Activated CD8-positive, alpha-beta T cell treated with anti-CD3 and anti-CD28 coated beads for 36 hours (primary cell): ENCODE measurements at regions of chr20 and their contacts with region 1.

Region 1: DNA sequence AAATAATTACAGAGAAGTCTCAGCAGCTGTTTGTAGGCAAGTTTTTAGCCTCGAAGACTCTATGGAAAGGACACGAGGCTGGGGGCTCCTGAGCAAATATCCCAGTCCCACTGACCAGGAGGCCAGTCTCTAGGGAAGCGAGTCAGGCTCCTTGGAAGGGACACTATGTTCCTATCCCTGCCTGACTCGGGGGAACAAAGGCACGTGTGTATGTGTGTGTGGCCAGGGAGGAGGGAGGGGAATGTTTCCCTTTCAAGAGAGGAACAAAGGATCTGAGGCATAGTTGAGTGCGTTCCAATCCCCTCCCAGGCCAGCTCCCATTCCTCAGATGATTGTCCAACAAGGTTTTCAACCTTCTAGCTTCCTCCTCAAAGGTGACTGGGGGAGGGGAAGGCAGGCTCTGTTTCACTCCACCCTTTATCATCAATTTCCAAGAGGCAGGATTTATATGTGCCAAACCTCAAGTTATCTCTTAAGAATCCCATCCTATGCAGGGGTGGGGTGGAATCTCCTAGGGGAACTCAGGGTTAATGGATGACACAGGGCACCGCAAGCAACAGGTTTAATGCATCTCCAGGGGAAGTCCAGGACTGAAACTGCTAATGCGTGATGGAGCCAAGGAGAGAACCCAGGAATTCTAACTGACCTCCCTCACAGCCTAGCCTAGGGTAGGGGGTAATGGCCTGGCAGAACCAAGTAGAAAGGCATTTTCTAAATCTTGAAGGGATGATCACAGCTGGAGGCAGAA is 9.9 kb downstream of the BCL2L1 start:
- DNase-seq: no peak
- ATAC-seq: no peak
- H3K4me3 Mint-ChIP-seq: peak overlapping the region; percentile 97
- H3K27ac Mint-ChIP-seq: peak overlapping the region; percentile 97
- H3K4me1 Mint-ChIP-seq: peaks cover 89% of the 10 kb centered on the region
- H3K27me3 Mint-ChIP-seq: no peaks in the 10 kb centered on the region
- CTCF ChIP-seq: no peak

Region 2: GRCh38 chr20:31674895-31675827 is 37.6 kb before region 1 on chr20:
- CTCF ChIA-PET with region 1: interaction called, 131 read pairs
- POLR2A ChIA-PET with region 1: interaction called, 107 read pairs
- intact Hi-C with region 1: loop called (anchors 2 kb)
- DNase-seq: peak; percentile 76
- ATAC-seq: peak; percentile 63
- H3K4me3 Mint-ChIP-seq: peak overlapping the region; percentile 77
- H3K27ac Mint-ChIP-seq: peak overlapping the region; percentile 97
- H3K4me1 Mint-ChIP-seq: peaks cover 80% of the 10 kb centered on the region
- H3K27me3 Mint-ChIP-seq: no peaks in the 10 kb centered on the region
- CTCF ChIP-seq: no peak

Region 3: GRCh38 chr20:31698803-31699718 is 13.7 kb before region 1 on chr20:
- CTCF ChIA-PET with region 1: interaction called, 17 read pairs
- POLR2A ChIA-PET with region 1: interaction called, 6 read pairs
- intact Hi-C with region 1: no loop called
- DNase-seq: peak; percentile 38
- ATAC-seq: peak; percentile 76
- H3K4me3 Mint-ChIP-seq: peak overlapping the region; percentile 24
- H3K27ac Mint-ChIP-seq: peak overlapping the region; percentile 65
- H3K4me1 Mint-ChIP-seq: peaks cover 70% of the 10 kb centered on the region
- H3K27me3 Mint-ChIP-seq: no peaks in the 10 kb centered on the region
- CTCF ChIP-seq: no peak

Region 4: GRCh38 chr20:31781945-31782344 is 69.2 kb after region 1 on chr20:
- CTCF ChIA-PET with region 1: no interaction called
- POLR2A ChIA-PET with region 1: no interaction called
- intact Hi-C with region 1: no loop called
- DNase-seq: no peak
- ATAC-seq: no peak
- H3K4me3 Mint-ChIP-seq: no peak overlapping the region
- H3K27ac Mint-ChIP-seq: no peak overlapping the region
- H3K4me1 Mint-ChIP-seq: no peaks in the 10 kb centered on the region
- H3K27me3 Mint-ChIP-seq: no peaks in the 10 kb centered on the region
- CTCF ChIP-seq: no peak

Region 5: GRCh38 chr20:31822421-31823330 is 109.9 kb after region 1 on chr20:
- CTCF ChIA-PET with region 1: no interaction called
- POLR2A ChIA-PET with region 1: no interaction called
- intact Hi-C with region 1: no loop called
- DNase-seq: peak; percentile 78
- ATAC-seq: peak; percentile 92
- H3K4me3 Mint-ChIP-seq: no peak overlapping the region
- H3K27ac Mint-ChIP-seq: no peak overlapping the region
- H3K4me1 Mint-ChIP-seq: peaks cover 2% of the 10 kb centered on the region
- H3K27me3 Mint-ChIP-seq: peaks cover 2% of the 10 kb centered on the region
- CTCF ChIP-seq: peak; percentile 99